ENCODE measurements at regions of chr19 and their contacts with region 1.

Region 1: GRCh38 chr19:42268704-42269477 is at the start of gene CIC:
- DNase-seq: peak; percentile 99
- H3K4me3 Mint-ChIP-seq: no peak within 1 kb of the TSS
- H3K27ac Mint-ChIP-seq: peak within 1 kb of the TSS; percentile 99
- H3K4me1 Mint-ChIP-seq: peaks cover 30% of the 10 kb centered on the region
- H3K27me3 Mint-ChIP-seq: no peaks in the 10 kb centered on the region
- total RNA-seq, gene CIC: 66.9 and 68.0 TPM in 2 replicates

Region 2: DNA sequence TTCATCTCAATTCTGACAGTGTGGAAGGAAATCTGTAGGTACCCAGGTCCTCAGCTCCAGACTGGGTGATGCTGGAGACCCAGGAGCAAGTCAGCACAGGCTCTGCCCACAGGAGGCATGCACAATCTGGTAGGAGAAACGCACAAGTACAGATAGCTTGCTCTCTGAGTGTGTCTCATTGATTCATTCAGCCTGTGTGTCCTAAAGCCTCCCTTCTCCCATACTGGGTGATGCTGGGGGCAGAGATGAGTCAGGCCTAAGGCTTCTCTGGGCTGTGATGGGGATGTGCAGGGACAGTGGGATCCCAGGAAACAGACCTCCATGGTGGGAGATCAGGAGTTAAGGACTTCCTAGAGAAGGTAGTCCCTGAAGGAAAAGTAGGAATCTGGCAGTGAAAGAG is 42.0 kb before region 1 on chr19:
- intact Hi-C with region 1: no loop called
- DNase-seq: no peak
- H3K4me3 Mint-ChIP-seq: no peak overlapping the region
- H3K27ac Mint-ChIP-seq: no peak overlapping the region
- H3K4me1 Mint-ChIP-seq: peaks cover 17% of the 10 kb centered on the region
- H3K27me3 Mint-ChIP-seq: no peaks in the 10 kb centered on the region

Region 3: DNA sequence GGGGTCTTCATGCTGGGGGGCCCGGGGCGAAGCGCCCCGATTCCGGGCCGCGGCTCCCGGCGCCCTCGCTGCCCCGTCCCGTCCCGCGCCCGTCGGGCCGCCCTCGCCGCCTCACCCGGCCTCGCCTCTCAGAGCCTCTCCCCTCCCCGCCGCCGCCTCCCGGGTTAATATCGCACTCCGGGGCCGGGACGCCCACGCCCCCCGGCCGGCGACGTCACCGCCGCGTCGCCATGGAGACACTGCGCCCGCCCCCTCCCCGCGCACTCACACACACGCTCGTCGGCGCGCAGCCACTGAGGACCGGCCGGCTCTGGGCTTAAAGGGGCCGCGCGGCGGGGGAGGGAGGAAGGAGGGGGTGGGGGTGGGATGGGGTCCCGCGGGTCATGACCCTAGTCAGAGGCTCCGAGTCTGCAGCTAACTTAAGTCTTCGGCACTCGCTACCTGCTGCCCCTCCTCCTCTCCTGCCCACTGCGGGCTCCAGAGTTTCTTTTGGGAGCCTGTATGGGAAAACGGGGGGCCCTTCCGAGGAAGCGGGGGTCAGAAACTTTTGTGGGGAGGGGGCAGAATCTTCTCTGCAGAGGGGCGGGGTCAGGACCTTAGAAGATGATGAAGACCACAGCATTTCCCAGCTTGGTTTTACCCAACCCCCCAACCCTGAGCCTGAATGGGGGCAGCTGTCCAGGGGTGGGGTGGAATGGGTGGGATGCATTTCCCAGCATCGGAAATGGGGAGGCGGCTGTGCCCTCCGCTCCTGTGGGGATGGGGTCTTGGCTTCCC is 13.7 kb before region 1 on chr19 and contains the start of gene ERF:
- intact Hi-C with region 1: loop called (anchors 1 kb)
- DNase-seq: peak; percentile 92
- H3K4me3 Mint-ChIP-seq: peak within 1 kb of the TSS; percentile 74
- H3K27ac Mint-ChIP-seq: peak within 1 kb of the TSS; percentile 65
- H3K4me1 Mint-ChIP-seq: peaks cover 19% of the 10 kb centered on the region
- H3K27me3 Mint-ChIP-seq: peaks cover 9% of the 10 kb centered on the region
- total RNA-seq, gene ERF: 71.9 and 78.4 TPM in 2 replicates

Region 4: GRCh38 chr19:42295831-42296525 is 27.1 kb after region 1 on chr19:
- intact Hi-C with region 1: no loop called
- DNase-seq: peak; percentile 78
- H3K4me3 Mint-ChIP-seq: no peak overlapping the region
- H3K27ac Mint-ChIP-seq: peak overlapping the region; percentile 3
- H3K4me1 Mint-ChIP-seq: no peaks in the 10 kb centered on the region
- H3K27me3 Mint-ChIP-seq: no peaks in the 10 kb centered on the region

Measured in activated T-helper 1 cell treated with anti-CD3 and anti-CD28 coated beads, Interleukin-12 subunit alpha, Interleukin-12 subunit beta, Interleukin-2, Interleukin-4 antibody, amounts not matched to agents 30 ng/mL and 10 ng/mL and 1 ng/mL, durations not matched to agents 14 hours and 24 hours and 36 hours (primary cell).